T-cell (primary cell): ENCODE measurements at regions of chr9 and their contacts with region 1.

Region 1: GRCh38 chr9:76086539-76086938 is 196.1 kb downstream of the PCSK5 start:
- DNase-seq: no peak
- ATAC-seq: no peak
- H3K4me3 ChIP-seq: no peak overlapping the region
- H3K4me3 Mint-ChIP-seq: no peak overlapping the region
- H3K27ac ChIP-seq: no peak overlapping the region
- H3K27ac Mint-ChIP-seq: no peak overlapping the region
- H3K4me1 ChIP-seq: no peaks in the 10 kb centered on the region
- H3K4me1 Mint-ChIP-seq: peaks cover 0 to 6% (median 0%) of the 10 kb centered on the region in 3 donors
- H3K27me3 ChIP-seq: no peaks in the 10 kb centered on the region
- H3K27me3 Mint-ChIP-seq: no peaks in the 10 kb centered on the region

Region 2: DNA sequence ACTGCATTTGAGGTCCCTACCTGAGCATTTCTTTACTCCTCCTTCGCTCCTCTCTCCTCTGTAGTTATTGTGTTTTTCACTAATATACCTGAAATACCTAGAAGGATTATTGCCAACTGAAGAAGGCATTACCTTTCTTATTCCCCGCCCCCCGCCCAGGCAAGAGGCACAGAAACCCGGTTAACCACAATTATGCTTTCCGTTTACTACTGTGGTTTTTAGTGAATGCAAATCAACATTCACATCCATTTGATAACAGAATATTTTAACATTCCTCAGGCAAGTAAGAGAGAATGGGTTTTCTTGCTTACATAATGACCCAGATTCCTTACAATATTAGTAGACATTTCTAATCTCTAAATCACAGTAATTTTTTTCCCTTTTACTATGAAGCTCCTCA is 59.1 kb before region 1 on chr9:
- CTCF ChIA-PET with region 1: no interaction called
- POLR2A ChIA-PET with region 1: interaction called in 1 of 2 experiments, 10 read pairs
- DNase-seq: peak in 11 of 35 experiments; percentile 1 to 68 (median 12)
- ATAC-seq: peak; percentile 38 to 57 (median 41)
- H3K4me3 ChIP-seq: no peak overlapping the region
- H3K4me3 Mint-ChIP-seq: peak overlapping the region; percentile 51 to 67 (median 55)
- H3K27ac ChIP-seq: no peak overlapping the region
- H3K27ac Mint-ChIP-seq: peak overlapping the region; percentile 86 to 90
- H3K4me1 ChIP-seq: peaks cover 46 to 71% of the 10 kb centered on the region in 2 experiments
- H3K4me1 Mint-ChIP-seq: peaks cover 76 to 84% (median 80%) of the 10 kb centered on the region in 3 donors
- H3K27me3 ChIP-seq: no peaks in the 10 kb centered on the region
- H3K27me3 Mint-ChIP-seq: no peaks in the 10 kb centered on the region

Region 3: GRCh38 chr9:77649121-77649812 is 1562.7 kb after region 1 on chr9:
- CTCF ChIA-PET with region 1: no interaction called
- POLR2A ChIA-PET with region 1: no interaction called
- DNase-seq: peak in 1 of 35 experiments; percentile 8
- ATAC-seq: no peak
- H3K4me3 ChIP-seq: peak overlapping the region in 1 of 2 donors; percentile 69
- H3K4me3 Mint-ChIP-seq: peak overlapping the region in 1 of 3 donors; percentile 76
- H3K27ac ChIP-seq: no peak overlapping the region
- H3K27ac Mint-ChIP-seq: no peak overlapping the region
- H3K4me1 ChIP-seq: peaks cover 3 to 18% of the 10 kb centered on the region in 2 experiments
- H3K4me1 Mint-ChIP-seq: peaks cover 17 to 25% (median 18%) of the 10 kb centered on the region in 3 donors
- H3K27me3 ChIP-seq: peaks cover 4 to 31% of the 10 kb centered on the region in 2 experiments
- H3K27me3 Mint-ChIP-seq: peaks cover 37 to 44% of the 10 kb centered on the region in 2 donors